ENCODE measurements at regions of chr5 and their contacts with region 1.

Region 1: DNA sequence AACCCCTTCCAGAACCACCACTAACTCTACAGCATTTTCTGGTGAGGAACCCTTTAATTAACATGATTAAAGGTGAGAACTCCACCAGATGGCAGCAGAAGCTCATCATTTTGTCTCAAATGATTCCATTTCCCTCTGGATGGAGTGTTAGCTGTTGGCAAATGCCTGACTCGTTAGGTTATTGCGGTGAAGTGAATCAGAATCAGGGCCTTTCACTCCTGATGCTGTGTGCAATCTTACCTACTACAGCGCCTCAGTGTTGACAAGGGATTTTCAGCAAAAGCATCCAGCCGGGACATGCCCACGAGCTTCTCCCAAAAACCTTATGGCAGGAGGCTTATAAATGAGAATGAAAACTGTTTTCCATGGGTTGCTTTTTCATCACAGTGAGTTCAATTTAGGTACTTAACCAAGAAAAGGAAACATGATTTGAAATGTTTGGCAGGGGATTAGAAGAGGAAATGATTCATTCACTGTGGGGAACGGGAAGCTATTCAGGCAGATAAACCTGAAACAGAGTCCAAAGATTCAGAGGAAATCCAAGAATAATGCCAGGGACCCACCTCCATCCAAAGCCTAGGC is 48.0 kb upstream of the CAST start:
- DNase-seq: no peak
- H3K4me3 Mint-ChIP-seq: no peak overlapping the region
- H3K27ac Mint-ChIP-seq: no peak overlapping the region
- H3K4me1 Mint-ChIP-seq: peaks cover 6% of the 10 kb centered on the region
- H3K27me3 Mint-ChIP-seq: peaks cover 58% of the 10 kb centered on the region

Region 2: GRCh38 chr5:96687812-96688453 is 73.7 kb after region 1 on chr5:
- intact Hi-C with region 1: loop called (anchors 1 kb)
- DNase-seq: no peak
- H3K4me3 Mint-ChIP-seq: no peak overlapping the region
- H3K27ac Mint-ChIP-seq: no peak overlapping the region
- H3K4me1 Mint-ChIP-seq: peaks cover 5% of the 10 kb centered on the region
- H3K27me3 Mint-ChIP-seq: no peaks in the 10 kb centered on the region

Region 3: GRCh38 chr5:96699186-96699820 is 85.1 kb after region 1 on chr5:
- intact Hi-C with region 1: no loop called
- DNase-seq: no peak
- H3K4me3 Mint-ChIP-seq: no peak overlapping the region
- H3K27ac Mint-ChIP-seq: no peak overlapping the region
- H3K4me1 Mint-ChIP-seq: peaks cover 28% of the 10 kb centered on the region
- H3K27me3 Mint-ChIP-seq: no peaks in the 10 kb centered on the region